Mammary epithelial cell (primary cell): ENCODE measurements at regions of chr11 and their contacts with region 1.

Region 1: GRCh38 chr11:13098063-13098462 is 88.9 kb downstream of the RASSF10 start:
- DNase-seq: peak; percentile 99
- H3K4me3 ChIP-seq: no peak overlapping the region
- H3K27ac ChIP-seq: peak overlapping the region; percentile 91
- H3K4me1 ChIP-seq: peaks cover 19% of the 10 kb centered on the region
- H3K27me3 ChIP-seq: no peaks in the 10 kb centered on the region
- CTCF ChIP-seq: no peak

Region 2: GRCh38 chr11:13111813-13112130 is 13.7 kb after region 1 on chr11:
- CTCF ChIA-PET with region 1: no interaction called
- dilution Hi-C with region 1: no loop called
- in situ Hi-C with region 1: no loop called
- intact Hi-C with region 1: loop called (anchors 2 kb)
- DNase-seq: no peak
- H3K4me3 ChIP-seq: no peak overlapping the region
- H3K27ac ChIP-seq: no peak overlapping the region
- H3K4me1 ChIP-seq: peaks cover 41% of the 10 kb centered on the region
- H3K27me3 ChIP-seq: no peaks in the 10 kb centered on the region
- CTCF ChIP-seq: no peak